Activated CD8-positive, alpha-beta T cell treated with anti-CD3 and anti-CD28 coated beads for 36 hours (primary cell): ENCODE measurements at regions of chr6 and their contacts with region 1.

Region 1: DNA sequence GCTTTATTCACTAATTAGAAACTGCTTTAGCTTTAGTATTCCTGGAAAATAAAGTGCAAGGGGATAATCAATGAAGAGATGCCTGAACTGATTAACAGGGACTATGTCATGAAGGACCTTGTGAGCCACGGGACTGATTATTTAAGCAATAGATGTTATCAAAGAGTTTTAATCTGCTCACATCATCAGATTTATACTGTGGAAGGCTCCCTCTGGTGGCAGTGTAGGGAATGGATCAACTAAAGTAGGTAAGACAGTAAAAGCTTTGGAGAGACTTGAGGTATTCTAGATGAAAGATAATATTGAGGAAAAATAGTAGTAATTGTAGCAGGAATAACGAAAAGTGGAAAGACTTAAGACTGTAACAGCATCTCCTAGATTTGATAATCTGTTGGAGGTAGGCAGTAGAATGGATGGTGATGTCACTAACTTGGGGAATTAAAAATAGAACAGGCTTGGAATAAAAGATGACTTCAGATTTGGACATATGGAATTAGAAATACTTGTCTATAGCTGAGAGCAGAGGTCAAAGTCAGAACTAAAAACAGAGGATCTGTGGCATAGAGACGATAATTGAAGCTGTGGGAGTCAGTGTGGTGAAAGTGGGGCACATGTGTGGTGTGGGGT is 80.3 kb upstream of the HTR1E start:
- DNase-seq: peak; percentile 63
- ATAC-seq: no peak
- H3K4me3 Mint-ChIP-seq: no peak overlapping the region
- H3K27ac Mint-ChIP-seq: no peak overlapping the region
- H3K4me1 Mint-ChIP-seq: no peaks in the 10 kb centered on the region
- H3K27me3 Mint-ChIP-seq: no peaks in the 10 kb centered on the region
- CTCF ChIP-seq: peak; percentile 76

Region 2: DNA sequence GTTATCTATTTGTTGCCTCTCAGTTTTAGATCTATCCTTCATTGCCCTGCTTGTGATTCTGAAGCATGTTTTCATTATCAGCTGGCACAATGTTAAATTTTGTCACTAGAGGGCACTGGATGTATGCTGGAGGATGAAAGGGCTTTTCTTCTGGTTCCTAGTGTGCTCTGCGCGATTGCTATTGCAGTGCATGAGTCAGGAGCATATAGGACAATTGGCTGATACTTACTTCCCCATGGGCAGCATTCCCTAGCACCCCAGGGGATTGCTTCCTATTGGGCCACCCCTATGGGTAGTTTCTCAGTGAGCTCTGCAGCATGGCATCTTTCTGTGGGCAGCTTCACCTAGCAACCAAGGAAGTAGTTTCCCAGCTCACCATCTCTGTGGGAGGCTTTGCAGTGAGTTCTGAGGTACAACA is 934.0 kb before region 1 on chr6:
- CTCF ChIA-PET with region 1: interaction called, 6 read pairs
- POLR2A ChIA-PET with region 1: no interaction called
- intact Hi-C with region 1: loop called (anchors 10 kb)
- DNase-seq: peak; percentile 13
- ATAC-seq: no peak
- H3K4me3 Mint-ChIP-seq: no peak overlapping the region
- H3K27ac Mint-ChIP-seq: no peak overlapping the region
- H3K4me1 Mint-ChIP-seq: no peaks in the 10 kb centered on the region
- H3K27me3 Mint-ChIP-seq: no peaks in the 10 kb centered on the region
- CTCF ChIP-seq: peak; percentile 59

Region 3: DNA sequence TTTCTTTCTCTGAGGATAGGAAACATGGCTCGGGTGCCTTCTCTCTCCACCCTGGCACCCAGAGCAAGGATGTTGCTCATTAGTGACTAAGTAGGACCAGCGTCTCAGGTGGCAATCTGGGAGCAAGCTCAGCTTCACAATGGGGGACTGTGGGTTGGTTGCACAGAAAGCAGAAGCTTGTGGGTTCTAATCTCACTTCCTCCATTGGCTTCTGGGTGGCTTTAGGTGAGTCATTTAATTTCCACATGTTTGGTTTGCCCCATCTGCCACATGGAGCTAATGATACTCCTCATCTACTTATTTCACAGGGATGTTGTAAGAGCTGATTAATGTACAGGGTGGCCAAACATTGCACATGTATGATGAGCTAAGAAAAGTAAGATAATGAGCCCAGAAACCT is 899.8 kb after region 1 on chr6:
- CTCF ChIA-PET with region 1: no interaction called
- POLR2A ChIA-PET with region 1: no interaction called
- intact Hi-C with region 1: no loop called
- DNase-seq: peak; percentile 61
- ATAC-seq: peak; percentile 92
- H3K4me3 Mint-ChIP-seq: no peak overlapping the region
- H3K27ac Mint-ChIP-seq: no peak overlapping the region
- H3K4me1 Mint-ChIP-seq: peaks cover 11% of the 10 kb centered on the region
- H3K27me3 Mint-ChIP-seq: no peaks in the 10 kb centered on the region
- CTCF ChIP-seq: no peak